CD4-positive, alpha-beta T cell (primary cell): ENCODE measurements at regions of chr2 and their contacts with region 1.

Region 1: DNA sequence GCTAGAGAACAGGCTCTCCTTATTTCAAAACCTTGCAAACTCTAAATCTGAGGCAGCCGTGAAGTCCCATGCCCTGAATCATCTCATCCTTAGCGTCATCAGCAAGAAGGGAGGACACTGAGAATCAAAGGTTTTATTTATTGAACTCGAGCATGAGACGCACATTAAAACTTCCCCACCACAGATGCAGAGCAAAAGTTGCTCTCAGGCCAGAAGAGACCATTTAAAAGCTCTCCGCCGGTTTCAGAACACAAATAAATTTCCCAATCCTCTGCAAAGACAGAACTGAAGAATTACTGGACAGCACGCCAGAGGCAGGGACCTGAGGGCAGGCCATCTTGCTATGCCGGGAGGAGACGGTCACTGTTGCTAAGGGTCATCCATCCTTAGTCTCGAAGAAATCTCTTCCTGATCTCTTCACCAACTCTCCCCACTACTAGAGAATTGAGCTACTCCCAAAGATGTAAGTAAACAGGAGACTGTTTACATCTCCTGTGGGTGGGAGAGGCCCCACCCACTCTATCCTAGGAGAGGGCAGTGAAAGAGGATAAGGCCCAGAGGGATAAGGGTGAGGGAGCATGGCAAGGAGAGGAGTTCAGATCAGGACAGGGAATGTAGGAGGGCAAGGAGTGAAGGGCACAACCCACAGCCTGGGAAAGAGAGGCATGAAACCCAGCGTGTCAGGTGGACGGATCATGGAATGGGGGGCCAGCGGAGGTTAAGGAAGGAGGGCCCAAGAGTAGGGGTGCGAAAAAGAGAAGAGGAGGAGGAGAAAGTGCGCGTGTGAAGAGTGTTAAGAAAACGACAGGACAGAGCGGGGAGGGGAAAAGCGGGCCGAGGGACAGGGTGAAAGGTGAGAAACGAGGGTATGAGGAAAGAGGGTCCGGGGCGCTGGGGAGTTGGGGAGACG is 1.1 kb downstream of the AMMECR1L start:
- DNase-seq: no peak
- ATAC-seq: no peak
- H3K4me3 ChIP-seq: peak overlapping the region; percentile 46
- H3K4me3 Mint-ChIP-seq: peak overlapping the region; percentile 97
- H3K27ac ChIP-seq: no peak overlapping the region
- H3K27ac Mint-ChIP-seq: peak overlapping the region; percentile 88
- H3K4me1 ChIP-seq: peaks cover 21% of the 10 kb centered on the region
- H3K4me1 Mint-ChIP-seq: peaks cover 64% of the 10 kb centered on the region
- H3K27me3 ChIP-seq: no peaks in the 10 kb centered on the region
- H3K27me3 Mint-ChIP-seq: no peaks in the 10 kb centered on the region
- CTCF ChIP-seq: no peak

Region 2: GRCh38 chr2:127387655-127388422 is 496.9 kb before region 1 on chr2 and contains the start of gene MAP3K2:
- CTCF ChIA-PET with region 1: no interaction called
- POLR2A ChIA-PET with region 1: no interaction called
- intact Hi-C with region 1: loop called in 1 of 2 experiments (anchors 10 kb)
- DNase-seq: peak; percentile 87 to 99 (median 96)
- ATAC-seq: peak; percentile 69
- H3K4me3 ChIP-seq: peak within 1 kb of the TSS; percentile 82
- H3K4me3 Mint-ChIP-seq: peak within 1 kb of the TSS; percentile 98
- H3K27ac ChIP-seq: peak within 1 kb of the TSS; percentile 99 to 100
- H3K27ac Mint-ChIP-seq: peak within 1 kb of the TSS; percentile 100
- H3K4me1 ChIP-seq: peaks cover 33% of the 10 kb centered on the region
- H3K4me1 Mint-ChIP-seq: peaks cover 69% of the 10 kb centered on the region
- H3K27me3 ChIP-seq: no peaks in the 10 kb centered on the region
- H3K27me3 Mint-ChIP-seq: no peaks in the 10 kb centered on the region
- CTCF ChIP-seq: no peak
- total RNA-seq, gene MAP3K2: 103 to 105 TPM

Region 3: GRCh38 chr2:127810619-127811396 is 73.9 kb before region 1 on chr2 and contains the start of gene WDR33:
- CTCF ChIA-PET with region 1: no interaction called
- POLR2A ChIA-PET with region 1: interaction called, 3 read pairs
- intact Hi-C with region 1: loop called in 1 of 2 experiments (anchors 5 kb)
- DNase-seq: peak; percentile 89 to 98 (median 93)
- ATAC-seq: peak; percentile 96
- H3K4me3 ChIP-seq: peak within 1 kb of the TSS; percentile 83
- H3K4me3 Mint-ChIP-seq: peak within 1 kb of the TSS; percentile 97
- H3K27ac ChIP-seq: peak within 1 kb of the TSS; percentile 95 to 97
- H3K27ac Mint-ChIP-seq: peak within 1 kb of the TSS; percentile 99
- H3K4me1 ChIP-seq: peaks cover 36% of the 10 kb centered on the region
- H3K4me1 Mint-ChIP-seq: peaks cover 54% of the 10 kb centered on the region
- H3K27me3 ChIP-seq: no peaks in the 10 kb centered on the region
- H3K27me3 Mint-ChIP-seq: no peaks in the 10 kb centered on the region
- CTCF ChIP-seq: no peak
- total RNA-seq, gene WDR33: 59.8 to 61.5 TPM

Region 4: GRCh38 chr2:127857265-127857808 is 27.4 kb before region 1 on chr2:
- CTCF ChIA-PET with region 1: interaction called, 3 read pairs
- POLR2A ChIA-PET with region 1: interaction called, 5 read pairs
- intact Hi-C with region 1: loop called in 1 of 2 experiments (anchors 1 kb)
- DNase-seq: peak in 5 of 14 experiments; percentile 8 to 43 (median 14)
- ATAC-seq: peak; percentile 5
- H3K4me3 ChIP-seq: peak overlapping the region; percentile 92
- H3K4me3 Mint-ChIP-seq: peak overlapping the region; percentile 88
- H3K27ac ChIP-seq: peak overlapping the region; percentile 65 to 70
- H3K27ac Mint-ChIP-seq: peak overlapping the region; percentile 67
- H3K4me1 ChIP-seq: peaks cover 42% of the 10 kb centered on the region
- H3K4me1 Mint-ChIP-seq: peaks cover 49% of the 10 kb centered on the region
- H3K27me3 ChIP-seq: no peaks in the 10 kb centered on the region
- H3K27me3 Mint-ChIP-seq: no peaks in the 10 kb centered on the region
- CTCF ChIP-seq: no peak

Region 5: DNA sequence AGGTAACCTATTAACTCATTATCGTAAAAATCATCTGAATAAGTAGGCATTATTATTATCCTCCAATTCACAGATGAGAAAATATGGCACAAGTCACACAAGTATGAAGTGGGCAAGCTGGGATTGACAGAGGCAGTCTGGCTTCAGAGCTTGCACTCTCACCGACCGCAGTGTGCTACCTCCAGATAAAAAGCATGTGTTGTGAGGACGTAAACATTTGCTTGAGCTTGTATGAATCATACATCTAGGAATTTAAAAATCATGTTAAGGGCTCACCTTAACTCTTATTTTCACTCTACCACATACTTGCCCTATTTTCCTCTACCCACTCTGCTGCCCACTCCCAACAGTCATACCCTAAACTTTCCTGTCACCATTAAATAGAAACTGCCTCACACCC is 66.3 kb after region 1 on chr2:
- CTCF ChIA-PET with region 1: no interaction called
- POLR2A ChIA-PET with region 1: no interaction called
- intact Hi-C with region 1: no loop called
- DNase-seq: no peak
- ATAC-seq: no peak
- H3K4me3 ChIP-seq: no peak overlapping the region
- H3K4me3 Mint-ChIP-seq: no peak overlapping the region
- H3K27ac ChIP-seq: no peak overlapping the region
- H3K27ac Mint-ChIP-seq: no peak overlapping the region
- H3K4me1 ChIP-seq: no peaks in the 10 kb centered on the region
- H3K4me1 Mint-ChIP-seq: no peaks in the 10 kb centered on the region
- H3K27me3 ChIP-seq: no peaks in the 10 kb centered on the region
- H3K27me3 Mint-ChIP-seq: no peaks in the 10 kb centered on the region
- CTCF ChIP-seq: no peak

Region 6: DNA sequence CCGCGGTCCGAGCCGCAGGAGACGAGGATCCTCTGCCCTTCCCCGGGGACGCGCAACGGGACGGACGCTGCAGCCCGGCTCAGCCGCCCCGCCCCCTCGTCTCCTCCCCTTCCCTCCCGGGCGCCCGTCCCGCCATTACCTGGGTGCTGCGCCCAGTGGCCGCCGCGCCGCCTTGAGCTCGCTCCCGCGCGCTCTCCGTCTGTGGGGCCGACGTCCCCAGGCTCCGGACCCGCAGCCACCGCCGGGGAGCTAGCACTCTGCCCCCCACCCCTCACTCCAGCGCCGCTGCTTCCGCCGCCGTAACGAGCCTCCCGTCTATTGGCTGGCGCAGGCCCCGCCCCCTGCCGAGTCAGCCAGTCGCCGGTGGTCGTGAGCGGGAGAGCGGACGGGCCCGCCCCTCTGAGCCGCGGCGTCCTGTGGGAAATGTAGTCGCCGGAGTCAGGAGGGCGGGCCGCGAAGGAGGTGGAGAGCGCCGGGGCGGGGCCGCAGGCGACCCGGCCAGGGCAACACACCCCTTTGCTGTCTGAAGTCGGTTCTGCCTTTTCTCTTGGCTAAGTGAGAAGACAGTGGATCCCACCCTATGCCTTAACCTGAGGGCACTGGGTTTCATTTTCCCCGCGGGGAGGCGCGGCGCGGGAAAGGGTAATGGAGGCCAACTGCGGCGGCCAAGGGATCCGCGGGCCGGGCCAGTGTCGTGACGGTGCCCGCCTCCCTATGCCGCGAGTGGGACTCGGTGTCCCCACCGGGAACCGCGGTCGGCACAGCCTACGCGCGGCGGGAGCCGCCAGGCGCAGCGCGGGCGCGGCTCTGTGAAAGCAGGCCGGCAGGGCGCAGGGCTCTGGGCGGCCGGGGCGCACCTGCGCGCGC is 143.3 kb after region 1 on chr2 and contains the start of gene SAP130:
- CTCF ChIA-PET with region 1: interaction called, 5 read pairs
- POLR2A ChIA-PET with region 1: interaction called, 4 read pairs
- intact Hi-C with region 1: loop called (anchors 2 to 5 kb)
- DNase-seq: peak; percentile 96 to 99 (median 98)
- ATAC-seq: peak; percentile 76
- H3K4me3 ChIP-seq: peak within 1 kb of the TSS; percentile 77
- H3K4me3 Mint-ChIP-seq: peak within 1 kb of the TSS; percentile 99
- H3K27ac ChIP-seq: peak within 1 kb of the TSS; percentile 85 to 89
- H3K27ac Mint-ChIP-seq: peak within 1 kb of the TSS; percentile 96
- H3K4me1 ChIP-seq: peaks cover 15% of the 10 kb centered on the region
- H3K4me1 Mint-ChIP-seq: peaks cover 30% of the 10 kb centered on the region
- H3K27me3 ChIP-seq: no peaks in the 10 kb centered on the region
- H3K27me3 Mint-ChIP-seq: no peaks in the 10 kb centered on the region
- CTCF ChIP-seq: no peak
- total RNA-seq, gene SAP130: 19.2 to 21.0 TPM

Region 7: GRCh38 chr2:128090945-128091725 is 206.4 kb after region 1 on chr2 and contains the start of gene UGGT1:
- CTCF ChIA-PET with region 1: no interaction called
- POLR2A ChIA-PET with region 1: interaction called, 12 read pairs
- intact Hi-C with region 1: loop called (anchors 2 to 5 kb)
- DNase-seq: peak; percentile 88 to 98 (median 91)
- ATAC-seq: peak; percentile 96
- H3K4me3 ChIP-seq: peak within 1 kb of the TSS; percentile 89
- H3K4me3 Mint-ChIP-seq: peak within 1 kb of the TSS; percentile 98
- H3K27ac ChIP-seq: peak within 1 kb of the TSS; percentile 75 to 82
- H3K27ac Mint-ChIP-seq: peak within 1 kb of the TSS; percentile 97
- H3K4me1 ChIP-seq: peaks cover 26% of the 10 kb centered on the region
- H3K4me1 Mint-ChIP-seq: peaks cover 53% of the 10 kb centered on the region
- H3K27me3 ChIP-seq: no peaks in the 10 kb centered on the region
- H3K27me3 Mint-ChIP-seq: no peaks in the 10 kb centered on the region
- CTCF ChIP-seq: no peak
- total RNA-seq, gene UGGT1: 23.5 to 28.4 TPM

Region 8: DNA sequence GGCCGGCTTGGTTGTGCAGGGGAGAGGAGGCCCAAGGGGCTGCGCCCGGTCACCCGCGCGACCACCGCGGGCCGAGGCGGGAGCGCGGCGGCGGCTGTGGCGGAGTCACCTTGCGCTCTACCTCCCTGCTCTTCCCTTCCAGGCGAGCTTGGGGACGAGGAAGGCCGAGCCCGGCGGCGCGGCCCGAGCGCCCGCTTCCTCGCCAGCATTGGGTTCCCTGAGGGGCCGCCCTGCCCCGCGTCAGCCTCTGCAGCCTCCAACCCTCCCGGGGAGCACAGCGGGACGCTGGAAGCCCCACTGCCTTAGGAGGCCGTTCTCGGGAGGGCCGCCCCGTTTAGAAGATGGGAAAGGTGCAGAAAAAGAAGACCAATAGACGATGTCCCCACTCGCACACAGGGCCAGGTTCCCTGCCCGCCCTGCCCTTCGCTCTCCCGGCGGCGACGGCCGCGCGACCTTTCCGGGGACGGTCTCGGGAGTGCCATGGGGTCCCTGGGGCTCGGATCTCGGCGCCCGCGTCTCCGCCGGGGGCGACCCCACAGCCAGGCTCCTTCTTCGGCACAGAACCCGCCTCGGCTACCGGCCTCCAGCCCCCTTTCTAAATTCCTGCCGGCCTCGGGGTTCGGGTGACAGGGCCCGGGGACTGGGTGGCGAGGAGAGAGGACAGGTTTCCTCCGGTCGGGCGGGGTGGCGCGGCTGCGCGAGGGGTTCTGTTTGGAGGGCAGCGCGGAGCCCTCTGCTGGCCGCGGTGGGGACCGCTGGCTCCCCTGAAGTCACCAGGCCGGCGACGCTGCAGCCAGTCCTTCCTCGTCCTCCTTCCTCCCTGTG is 348.5 kb after region 1 on chr2:
- CTCF ChIA-PET with region 1: no interaction called
- POLR2A ChIA-PET with region 1: no interaction called
- intact Hi-C with region 1: loop called in 1 of 2 experiments (anchors 5 kb)
- DNase-seq: peak; percentile 68 to 88 (median 80)
- ATAC-seq: peak; percentile 97
- H3K4me3 ChIP-seq: peak overlapping the region; percentile 57
- H3K4me3 Mint-ChIP-seq: peak overlapping the region; percentile 93
- H3K27ac ChIP-seq: no peak overlapping the region
- H3K27ac Mint-ChIP-seq: no peak overlapping the region
- H3K4me1 ChIP-seq: peaks cover 14% of the 10 kb centered on the region
- H3K4me1 Mint-ChIP-seq: no peaks in the 10 kb centered on the region
- H3K27me3 ChIP-seq: no peaks in the 10 kb centered on the region
- H3K27me3 Mint-ChIP-seq: no peaks in the 10 kb centered on the region
- CTCF ChIP-seq: peak; percentile 85